HCT116 (cell line): ENCODE measurements at regions of chr4 and their contacts with region 1.

Region 1: DNA sequence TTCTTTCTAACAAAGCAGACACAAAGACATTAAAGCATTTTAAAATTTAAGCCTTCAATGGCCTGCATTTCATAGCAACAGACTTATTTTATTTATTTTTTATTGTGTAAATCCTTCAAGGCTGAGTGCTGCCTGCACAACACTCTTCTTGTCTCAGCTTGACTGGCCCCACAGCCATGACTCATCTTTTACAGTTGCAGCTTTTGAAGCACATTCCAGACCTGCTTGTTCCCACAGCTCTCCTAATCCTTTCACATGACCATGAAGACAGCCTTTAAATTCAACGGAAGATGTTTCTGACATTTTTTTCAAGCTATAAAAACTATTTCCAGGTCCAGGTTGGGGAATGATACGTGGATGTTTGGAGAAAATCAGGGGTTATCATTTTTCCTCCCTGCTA is 276.9 kb upstream of the TACR3 start:
- DNase-seq: peak; percentile 78
- ATAC-seq: peak; percentile 91
- H3K4me3 ChIP-seq: peak overlapping the region; percentile 26 to 43
- H3K27ac ChIP-seq: peak overlapping the region; percentile 39; the same call in 1 of the 2 replicates
- H3K4me1 ChIP-seq: peaks cover 11 to 19% of the 10 kb centered on the region in 2 experiments; a peak in 3 of 4 replicates
- H3K27me3 ChIP-seq: no peaks in the 10 kb centered on the region
- CTCF ChIP-seq: no peak
- POLR2A ChIP-seq: no peak
- RAD21 ChIP-seq: no peak

Region 2: DNA sequence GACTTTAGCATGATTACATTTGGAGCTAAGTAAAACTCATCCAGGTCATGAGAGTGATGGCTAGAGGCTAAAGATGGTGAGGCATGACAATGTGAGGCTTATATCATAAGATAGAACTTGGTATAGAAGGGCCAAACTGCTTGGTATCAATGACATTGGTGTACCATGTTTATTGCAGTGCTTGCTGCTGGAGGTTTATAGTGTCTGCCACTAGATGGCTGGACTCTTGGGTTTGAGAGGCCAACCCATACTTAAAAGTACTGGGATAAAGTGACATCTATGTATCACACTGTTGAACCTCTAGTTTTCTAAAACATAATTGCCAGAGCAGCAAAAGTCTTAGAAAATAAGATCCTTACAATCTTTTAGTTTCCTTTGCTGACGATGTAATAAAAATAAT is 193.9 kb before region 1 on chr4:
- CTCF ChIA-PET with region 1: no interaction called
- POLR2A ChIA-PET with region 1: no interaction called
- RAD21 ChIA-PET with region 1: no interaction called
- intact Hi-C with region 1: loop called (anchors 10 kb)
- DNase-seq: no peak
- ATAC-seq: no peak; the same call in 1 of the 2 replicates
- H3K4me3 ChIP-seq: no peak overlapping the region
- H3K27ac ChIP-seq: no peak overlapping the region
- H3K4me1 ChIP-seq: no peaks in the 10 kb centered on the region
- H3K27me3 ChIP-seq: no peaks in the 10 kb centered on the region
- CTCF ChIP-seq: 0 out of 6 replicates have a peak, but pooled peaks of 2 of the 3 experiments have one; percentile 19 to 20
- POLR2A ChIP-seq: no peak
- RAD21 ChIP-seq: no peak